Caco-2 (cell line): ENCODE measurements at regions of chr14 and their contacts with region 1.

Region 1: GRCh38 chr14:96805956-96806355 is 8.8 kb downstream of the VRK1 start:
- DNase-seq: no peak
- H3K4me3 ChIP-seq: no peak overlapping the region
- H3K4me3 Mint-ChIP-seq: no peak overlapping the region
- H3K27ac Mint-ChIP-seq: no peak overlapping the region
- H3K4me1 ChIP-seq: no peaks in the 10 kb centered on the region
- H3K4me1 Mint-ChIP-seq: peaks cover 16% of the 10 kb centered on the region
- H3K27me3 ChIP-seq: no peaks in the 10 kb centered on the region
- H3K27me3 Mint-ChIP-seq: no peaks in the 10 kb centered on the region
- CTCF ChIP-seq: no peak

Region 2: GRCh38 chr14:96824283-96824682 is 18.3 kb after region 1 on chr14:
- CTCF ChIA-PET with region 1: no interaction called
- POLR2A ChIA-PET with region 1: interaction called, 12 read pairs
- intact Hi-C with region 1: no loop called
- DNase-seq: no peak
- H3K4me3 ChIP-seq: no peak overlapping the region
- H3K4me3 Mint-ChIP-seq: no peak overlapping the region
- H3K27ac Mint-ChIP-seq: no peak overlapping the region
- H3K4me1 ChIP-seq: no peaks in the 10 kb centered on the region
- H3K4me1 Mint-ChIP-seq: peaks cover 6% of the 10 kb centered on the region
- H3K27me3 ChIP-seq: no peaks in the 10 kb centered on the region
- H3K27me3 Mint-ChIP-seq: no peaks in the 10 kb centered on the region
- CTCF ChIP-seq: no peak